ENCODE measurements at regions of chr10 and their contacts with region 1.

Region 1: DNA sequence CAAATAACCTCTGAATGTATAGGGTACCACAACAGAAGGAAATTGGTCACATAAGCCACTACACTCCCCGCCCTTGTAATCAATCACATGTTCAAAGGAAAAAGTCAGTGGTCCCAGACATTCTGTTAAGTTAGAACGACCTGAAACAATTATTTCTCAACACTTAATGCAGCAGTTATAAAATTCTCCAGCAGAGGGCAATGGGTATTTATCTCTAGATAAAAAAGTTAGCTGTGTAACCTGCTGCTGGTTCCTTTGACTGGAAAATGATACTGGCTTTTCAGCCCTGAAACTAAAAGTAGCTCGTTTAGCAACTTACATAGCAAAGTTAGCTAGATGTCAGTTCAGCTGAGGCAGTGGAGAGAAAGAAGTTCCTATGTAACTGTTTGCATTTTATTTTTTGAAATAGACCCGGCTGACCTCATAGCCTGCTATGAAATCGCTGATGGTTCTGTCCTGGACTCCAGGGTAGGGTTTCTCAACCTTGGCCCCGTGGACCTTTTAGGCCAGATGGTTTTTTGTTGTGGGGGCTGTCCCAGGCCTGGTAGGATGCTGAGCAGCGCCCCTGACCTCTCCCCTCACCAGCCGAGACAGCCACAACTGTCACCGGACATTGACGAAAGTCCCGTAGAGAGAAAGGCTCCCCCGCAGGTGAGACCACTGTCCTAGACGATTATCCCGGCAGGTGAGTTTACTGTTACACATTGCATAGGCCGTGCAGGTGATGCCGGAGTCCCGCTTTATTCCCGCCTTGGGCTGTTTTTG is 40.2 kb upstream of the PROSER2 start:
- DNase-seq: peak in 2 of 10 donors; percentile 40 to 55

Region 2: GRCh38 chr10:11551916-11552602 is 230.9 kb before region 1 on chr10:
- intact Hi-C with region 1: no loop called
- DNase-seq: no peak

Region 3: DNA sequence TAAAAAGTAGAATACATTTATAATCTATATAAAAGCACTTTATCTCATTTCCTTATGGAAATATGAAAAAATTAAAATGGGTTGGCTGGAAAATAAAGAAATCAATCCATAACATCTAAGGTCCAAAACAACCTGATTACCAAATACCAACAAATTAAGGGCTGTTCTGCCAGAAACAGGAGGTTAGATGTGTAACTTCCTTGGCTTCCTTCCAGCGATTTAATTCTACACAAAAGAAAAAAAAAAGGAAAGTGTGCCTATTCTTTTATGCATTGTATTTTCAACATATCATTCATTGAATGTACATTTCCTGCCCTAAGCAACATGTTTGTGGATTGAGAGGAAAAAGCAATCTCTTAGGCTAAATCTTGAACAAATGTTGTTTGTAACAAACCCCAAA is 135.3 kb before region 1 on chr10:
- intact Hi-C with region 1: no loop called
- DNase-seq: no peak

Region 4: DNA sequence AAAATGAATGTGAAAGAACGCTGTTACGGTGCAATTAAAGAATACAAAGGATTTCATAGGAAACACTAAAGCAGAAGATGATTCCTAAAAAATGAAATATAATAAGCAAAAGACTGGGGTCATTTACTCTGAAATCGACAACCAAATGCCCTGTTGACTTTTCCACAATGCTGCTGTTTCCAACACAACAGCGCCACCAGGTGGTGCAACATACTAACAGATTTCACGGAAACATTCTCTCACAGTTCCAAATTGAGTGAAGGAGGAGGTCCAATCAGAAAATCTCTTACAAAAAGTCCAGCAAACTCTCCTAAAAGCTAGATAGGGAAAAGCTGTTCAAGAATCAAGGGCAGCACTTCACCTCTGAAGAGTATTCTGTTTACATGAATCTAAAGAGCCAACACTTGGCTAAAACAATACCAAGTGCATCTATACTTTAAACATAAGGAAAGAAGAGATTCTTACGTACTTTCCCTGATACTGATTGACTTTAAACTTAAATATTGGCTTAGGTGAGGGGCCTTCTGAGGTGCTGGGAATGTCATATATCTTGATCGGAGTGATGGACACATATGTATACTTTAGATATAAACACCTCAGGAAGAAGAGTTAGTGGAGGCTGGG is 203.7 kb after region 1 on chr10:
- intact Hi-C with region 1: loop called (anchors 2 kb)
- DNase-seq: peak in 9 of 10 donors; percentile 48 to 95 (median 78)

Region 5: DNA sequence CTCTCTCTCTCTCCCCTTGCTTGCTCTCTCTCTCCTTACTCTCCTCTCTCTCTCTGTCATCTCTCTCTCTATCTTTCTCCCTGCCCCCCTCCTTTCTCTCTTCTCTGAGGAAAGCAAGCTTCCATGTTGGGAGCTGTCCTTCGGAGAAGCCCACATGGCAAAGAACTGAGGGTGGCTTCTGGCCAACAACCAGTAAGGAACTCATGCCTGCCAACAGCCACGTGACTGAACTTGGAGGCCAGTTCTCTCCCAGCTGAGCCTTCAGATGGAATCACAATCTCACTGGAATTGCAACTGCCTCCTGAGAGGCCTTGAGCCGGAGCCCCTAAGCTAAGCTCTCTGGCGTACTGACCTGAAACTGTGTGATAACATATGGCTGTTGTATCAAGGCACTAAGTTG is 273.8 kb after region 1 on chr10:
- intact Hi-C with region 1: no loop called
- DNase-seq: no peak

Measured in posterior cingulate gyrus (tissue), 11 donors.